Mammary epithelial cell (primary cell): ENCODE measurements at regions of chr19 and their contacts with region 1.

Region 1: GRCh38 chr19:45234089-45234869 is 10.9 kb downstream of the EXOC3L2 start:
- DNase-seq: no peak
- H3K4me3 ChIP-seq: no peak overlapping the region
- H3K27ac ChIP-seq: no peak overlapping the region
- H3K4me1 ChIP-seq: peaks cover 18% of the 10 kb centered on the region
- H3K27me3 ChIP-seq: no peaks in the 10 kb centered on the region
- CTCF ChIP-seq: no peak

Region 2: DNA sequence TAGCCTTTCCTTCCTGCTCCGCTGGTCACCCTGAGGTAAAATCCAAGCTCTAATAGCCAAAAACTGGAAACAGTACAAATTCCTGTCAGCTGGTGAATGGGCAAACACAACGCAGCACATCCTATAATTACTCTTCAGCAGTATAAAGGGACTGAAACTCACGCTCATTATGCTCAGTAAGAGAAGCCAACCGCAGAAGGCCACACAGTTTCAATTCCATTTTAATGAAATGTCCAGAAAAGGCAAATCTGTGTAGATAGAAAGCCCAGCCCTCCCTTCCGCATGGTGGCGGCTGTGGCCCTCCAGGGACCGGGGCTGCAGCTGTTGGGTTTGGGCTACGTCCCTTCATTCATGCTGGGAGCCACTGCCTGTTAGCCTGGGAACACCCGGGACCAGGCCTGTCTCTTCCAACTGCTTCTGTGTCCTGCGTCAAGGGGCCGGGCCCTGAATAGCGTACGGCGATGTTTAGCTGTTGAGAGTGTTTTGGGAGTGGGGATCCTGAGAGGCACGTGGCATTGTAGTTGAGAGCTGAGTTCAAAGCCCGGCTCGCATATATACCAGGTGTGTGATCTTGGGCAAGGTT is 97.0 kb before region 1 on chr19:
- CTCF ChIA-PET with region 1: no interaction called
- dilution Hi-C with region 1: loop called (anchors 5 kb)
- in situ Hi-C with region 1: no loop called
- intact Hi-C with region 1: no loop called
- DNase-seq: no peak
- H3K4me3 ChIP-seq: no peak overlapping the region
- H3K27ac ChIP-seq: no peak overlapping the region
- H3K4me1 ChIP-seq: peaks cover 19% of the 10 kb centered on the region
- H3K27me3 ChIP-seq: no peaks in the 10 kb centered on the region
- CTCF ChIP-seq: no peak

Region 3: GRCh38 chr19:45211751-45212381 is 22.4 kb before region 1 on chr19:
- CTCF ChIA-PET with region 1: interaction called, 12 read pairs
- dilution Hi-C with region 1: no loop called
- in situ Hi-C with region 1: no loop called
- intact Hi-C with region 1: no loop called
- DNase-seq: no peak
- H3K4me3 ChIP-seq: no peak overlapping the region
- H3K27ac ChIP-seq: no peak overlapping the region
- H3K4me1 ChIP-seq: peaks cover 7% of the 10 kb centered on the region
- H3K27me3 ChIP-seq: no peaks in the 10 kb centered on the region
- CTCF ChIP-seq: no peak

Region 4: DNA sequence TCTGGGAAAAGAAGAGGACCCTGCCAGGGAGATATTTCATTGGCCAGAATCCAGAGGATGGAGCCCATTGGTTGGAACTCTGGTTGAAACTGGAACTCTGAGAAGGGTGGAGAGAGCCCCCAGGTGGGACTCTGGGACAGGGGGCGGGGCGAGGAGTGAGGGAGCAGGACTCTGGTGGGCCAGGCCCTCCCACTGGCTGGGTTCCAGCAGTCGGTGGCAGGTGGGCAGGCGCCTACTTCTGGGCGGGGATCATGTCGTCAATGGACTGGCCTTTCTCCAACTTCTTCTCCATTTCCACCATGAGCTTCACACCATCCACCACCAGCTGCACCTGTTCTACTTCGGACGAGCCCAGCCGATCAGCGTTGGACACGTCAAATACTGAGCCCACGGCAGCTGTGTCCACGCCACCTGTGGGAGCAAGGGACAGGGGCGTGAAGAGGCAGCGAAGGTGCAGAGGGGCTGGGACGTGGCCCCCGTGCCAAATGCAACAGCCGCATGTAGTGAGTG is 72.3 kb after region 1 on chr19:
- CTCF ChIA-PET with region 1: no interaction called
- dilution Hi-C with region 1: loop called (anchors 5 kb)
- in situ Hi-C with region 1: no loop called
- intact Hi-C with region 1: no loop called
- DNase-seq: no peak
- H3K4me3 ChIP-seq: no peak overlapping the region
- H3K27ac ChIP-seq: no peak overlapping the region
- H3K4me1 ChIP-seq: peaks cover 13% of the 10 kb centered on the region
- H3K27me3 ChIP-seq: no peaks in the 10 kb centered on the region
- CTCF ChIP-seq: no peak